Cardiac septum (tissue), 1 donor: ENCODE measurements at regions of chr14 and their contacts with region 1.

Region 1: DNA sequence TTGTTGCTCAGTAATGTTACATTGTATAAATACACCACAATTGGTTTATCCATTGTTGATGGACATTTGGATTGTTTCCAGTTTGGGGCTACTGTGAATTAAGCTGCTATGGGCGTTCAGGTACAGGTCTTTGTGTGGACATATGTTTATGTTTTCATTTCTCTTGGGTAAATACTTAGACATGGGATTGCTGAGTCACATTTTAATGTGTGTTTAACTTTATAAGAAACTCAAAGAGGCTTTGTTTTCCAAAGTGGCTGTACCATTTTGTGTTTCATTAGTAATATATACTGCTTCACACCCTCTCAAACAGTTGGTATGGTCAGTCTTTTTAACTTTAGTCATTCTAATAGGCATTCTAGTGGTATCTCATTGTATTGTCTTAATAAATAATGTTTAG is 225.0 kb downstream of the SPTSSA start:
- DNase-seq: no peak

Region 2: DNA sequence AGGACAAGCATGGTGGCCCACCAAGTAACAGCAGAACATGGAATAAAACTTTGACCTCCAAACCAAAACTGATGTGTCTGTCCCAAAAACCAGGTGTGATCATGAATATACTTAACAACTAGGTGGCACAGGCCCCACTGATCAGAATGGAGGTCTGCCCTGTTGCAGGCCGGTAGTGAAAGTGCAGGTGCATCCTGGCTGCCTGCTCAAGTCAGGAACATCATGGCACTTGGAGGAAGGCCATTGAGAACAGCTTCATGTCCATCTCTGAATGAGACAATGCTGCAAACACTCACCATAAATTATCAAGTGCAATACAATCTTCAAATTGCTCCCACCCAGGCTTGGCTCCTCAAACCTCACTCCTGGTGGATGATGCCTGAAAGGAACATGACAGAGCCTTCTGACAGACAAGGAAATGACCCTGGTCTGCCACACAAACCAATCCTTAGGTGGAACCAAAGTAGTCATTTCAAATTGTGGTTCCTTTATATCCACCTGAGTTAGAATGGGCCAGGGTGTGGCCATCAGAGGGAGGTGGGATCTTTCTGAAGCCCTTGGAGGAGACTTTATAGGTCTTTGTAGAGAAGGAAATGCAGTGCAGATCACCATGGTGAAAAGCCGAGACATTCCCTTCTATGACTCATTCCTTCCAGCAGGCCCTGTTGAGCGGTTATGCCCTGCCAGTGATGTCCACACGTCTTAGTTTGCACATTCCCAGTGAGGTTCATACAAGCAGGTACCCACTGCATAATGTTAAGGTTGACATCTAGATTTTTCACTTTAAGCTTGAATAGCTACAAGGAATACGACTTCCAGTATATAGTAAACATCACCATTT is 322.2 kb before region 1 on chr14:
- intact Hi-C with region 1: loop called (anchors 10 kb)
- DNase-seq: no peak